Aorta (tissue), 5 donors: ENCODE measurements at regions of chr12 and their contacts with region 1.

Region 1: GRCh38 chr12:56645717-56646446 is at the start of gene ATP5F1B:
- DNase-seq: peak; percentile 96 to 97
- ATAC-seq: peak; percentile 99
- H3K4me3 ChIP-seq: peak within 1 kb of the TSS; percentile 89 to 93
- H3K27ac ChIP-seq: peak within 1 kb of the TSS; percentile 29 to 97
- H3K4me1 ChIP-seq: peaks cover 0 to 4% of the 10 kb centered on the region in 2 donors
- H3K27me3 ChIP-seq: no peaks in the 10 kb centered on the region
- total RNA-seq, gene ATP5F1B: 216 to 262 TPM

Region 2: DNA sequence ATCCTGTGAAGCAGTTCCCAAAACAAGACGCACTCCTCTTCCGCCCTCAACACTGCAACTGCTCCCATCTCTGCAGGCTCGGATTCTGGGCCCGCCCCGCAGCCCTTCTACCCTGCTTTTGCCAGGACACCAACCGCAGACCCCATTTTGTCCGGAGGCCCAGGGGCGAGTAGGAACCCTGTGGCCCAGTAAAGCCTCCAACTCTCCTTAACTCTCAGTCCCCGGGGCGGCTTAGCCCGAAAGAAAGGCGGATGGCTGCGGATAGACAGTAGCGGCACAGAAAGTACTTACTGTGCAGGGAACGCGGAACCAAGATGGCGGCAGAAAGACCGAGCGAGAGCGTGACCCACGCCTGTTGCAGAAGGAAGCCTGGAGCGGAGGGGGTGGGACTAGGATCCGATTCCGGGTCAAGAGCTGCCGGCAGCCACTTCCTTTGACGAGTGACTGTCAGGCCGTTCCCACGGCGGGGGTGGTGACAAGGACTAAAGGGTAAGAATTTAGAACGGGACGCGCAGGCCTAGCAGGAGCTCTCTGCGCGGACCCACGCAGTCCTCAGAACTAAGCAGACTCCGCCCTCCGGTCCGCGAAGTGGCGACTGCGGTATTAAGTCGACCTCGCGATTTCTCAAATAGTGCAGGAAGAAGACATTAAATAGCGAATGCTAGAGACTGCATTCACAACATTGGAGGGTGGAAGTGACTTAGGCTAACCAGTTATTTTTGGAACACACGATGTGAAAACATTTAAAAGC is 79.3 kb after region 1 on chr12 and contains the start of gene NACA:
- intact Hi-C with region 1: loop called (anchors 5 to 10 kb)
- DNase-seq: peak; percentile 99 to 100
- ATAC-seq: peak; percentile 97
- H3K4me3 ChIP-seq: peak within 1 kb of the TSS; percentile 80 to 82
- H3K27ac ChIP-seq: peak within 1 kb of the TSS; percentile 69 to 88
- H3K4me1 ChIP-seq: peaks cover 0 to 6% of the 10 kb centered on the region in 2 donors
- H3K27me3 ChIP-seq: no peaks in the 10 kb centered on the region
- total RNA-seq, gene NACA: 575 to 674 TPM